ENCODE measurements at regions of chr17 and their contacts with region 1.

Region 1: DNA sequence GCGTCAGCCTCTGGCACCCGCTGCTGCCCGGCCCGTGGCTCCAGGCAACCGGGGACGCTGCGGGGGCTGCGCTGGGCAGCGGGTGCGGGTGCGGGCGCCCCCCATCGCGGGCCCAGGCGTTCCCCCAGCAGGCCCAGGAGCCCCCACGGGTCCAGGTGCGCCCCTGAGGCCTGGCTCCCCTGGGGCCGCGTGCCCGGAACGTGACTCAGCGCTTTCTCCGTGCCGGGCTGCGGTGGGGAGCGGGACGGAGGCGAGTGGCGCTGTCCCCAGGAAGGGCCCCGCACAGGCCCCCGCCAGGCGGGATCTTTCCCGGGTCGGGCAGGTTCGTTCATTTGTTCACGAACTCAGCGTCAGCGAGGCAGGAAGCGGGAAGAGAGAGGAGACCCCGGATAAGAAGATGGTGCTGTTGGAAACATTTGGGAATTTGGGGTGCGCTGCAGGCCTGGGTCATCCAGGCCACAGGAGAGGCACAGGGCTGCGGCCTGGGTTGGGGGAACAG is 18.4 kb upstream of the EXOC7 start:
- DNase-seq: peak in 2 of 35 experiments; percentile 25 to 33
- ATAC-seq: peak; percentile 18 to 35 (median 22)
- H3K4me3 ChIP-seq: peak overlapping the region; percentile 27 to 50
- H3K4me3 Mint-ChIP-seq: peak overlapping the region; percentile 39 to 59 (median 45)
- H3K27ac ChIP-seq: peak overlapping the region; percentile 23
- H3K27ac Mint-ChIP-seq: peak overlapping the region; percentile 69 to 75
- H3K4me1 ChIP-seq: peaks cover 6 to 28% of the 10 kb centered on the region in 2 experiments
- H3K4me1 Mint-ChIP-seq: peaks cover 19 to 33% (median 30%) of the 10 kb centered on the region in 3 donors
- H3K27me3 ChIP-seq: peaks cover 0 to 4% of the 10 kb centered on the region in 2 experiments
- H3K27me3 Mint-ChIP-seq: no peaks in the 10 kb centered on the region

Region 2: DNA sequence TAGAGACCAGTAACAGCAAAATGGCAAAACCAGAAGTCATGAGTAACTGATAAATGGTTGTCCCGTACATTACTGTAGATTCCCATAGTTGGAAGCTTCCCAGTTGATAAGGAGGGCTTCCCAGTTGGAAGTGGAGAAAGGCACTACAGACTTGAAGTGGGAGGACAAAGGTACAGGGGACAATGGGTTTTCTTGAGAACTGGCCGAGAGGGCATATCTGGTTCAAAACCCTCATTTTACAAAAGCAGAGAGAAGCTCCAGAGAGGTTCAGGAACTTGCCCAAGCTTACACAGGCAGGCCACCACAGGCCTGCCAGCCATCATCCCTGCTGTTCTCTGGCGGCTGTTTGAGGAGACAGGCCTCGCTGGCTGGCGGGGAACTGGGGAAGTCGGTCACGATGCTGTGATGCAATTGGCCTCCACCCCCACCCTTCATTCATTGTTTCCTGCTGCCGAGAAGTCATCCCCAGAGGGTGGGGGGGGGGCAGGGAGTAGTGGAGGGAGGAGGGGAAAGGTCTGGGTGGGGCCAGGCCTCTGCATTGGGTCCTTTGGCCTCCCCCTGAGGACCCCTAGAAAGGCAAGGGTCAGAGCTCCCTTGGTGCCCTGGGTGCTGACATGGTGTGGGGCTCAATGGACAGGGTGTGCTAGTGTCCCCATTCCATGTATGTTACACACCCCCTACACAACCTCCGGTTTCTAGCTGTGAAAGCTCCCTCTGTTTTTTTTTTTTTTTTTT is 146.2 kb after region 1 on chr17:
- CTCF ChIA-PET with region 1: no interaction called
- POLR2A ChIA-PET with region 1: interaction called, 3 to 10 read pairs
- DNase-seq: peak in 34 of 35 experiments; percentile 57 to 81 (median 67)
- ATAC-seq: peak in 1 of 4 experiments; percentile 5
- H3K4me3 ChIP-seq: peak overlapping the region; percentile 74 to 77
- H3K4me3 Mint-ChIP-seq: peak overlapping the region; percentile 85 to 91 (median 89)
- H3K27ac ChIP-seq: peak overlapping the region; percentile 83
- H3K27ac Mint-ChIP-seq: peak overlapping the region; percentile 95 to 96
- H3K4me1 ChIP-seq: peaks cover 43 to 83% of the 10 kb centered on the region in 2 experiments
- H3K4me1 Mint-ChIP-seq: peaks cover 65 to 69% (median 67%) of the 10 kb centered on the region in 3 donors
- H3K27me3 ChIP-seq: no peaks in the 10 kb centered on the region
- H3K27me3 Mint-ChIP-seq: no peaks in the 10 kb centered on the region

Region 3: GRCh38 chr17:76278952-76279741 is 157.2 kb after region 1 on chr17:
- CTCF ChIA-PET with region 1: interaction called, 27 to 29 read pairs
- POLR2A ChIA-PET with region 1: interaction called in 1 of 2 experiments, 4 read pairs
- DNase-seq: peak; percentile 48 to 89 (median 80)
- ATAC-seq: peak; percentile 72 to 86 (median 83)
- H3K4me3 ChIP-seq: no peak overlapping the region
- H3K4me3 Mint-ChIP-seq: no peak overlapping the region
- H3K27ac ChIP-seq: no peak overlapping the region
- H3K27ac Mint-ChIP-seq: no peak overlapping the region
- H3K4me1 ChIP-seq: peaks cover 5 to 31% of the 10 kb centered on the region in 2 experiments
- H3K4me1 Mint-ChIP-seq: peaks cover 19 to 31% (median 22%) of the 10 kb centered on the region in 3 donors
- H3K27me3 ChIP-seq: no peaks in the 10 kb centered on the region
- H3K27me3 Mint-ChIP-seq: no peaks in the 10 kb centered on the region